MCF 10A (cell line): ENCODE measurements at regions of chr6 and their contacts with region 1.

Region 1: DNA sequence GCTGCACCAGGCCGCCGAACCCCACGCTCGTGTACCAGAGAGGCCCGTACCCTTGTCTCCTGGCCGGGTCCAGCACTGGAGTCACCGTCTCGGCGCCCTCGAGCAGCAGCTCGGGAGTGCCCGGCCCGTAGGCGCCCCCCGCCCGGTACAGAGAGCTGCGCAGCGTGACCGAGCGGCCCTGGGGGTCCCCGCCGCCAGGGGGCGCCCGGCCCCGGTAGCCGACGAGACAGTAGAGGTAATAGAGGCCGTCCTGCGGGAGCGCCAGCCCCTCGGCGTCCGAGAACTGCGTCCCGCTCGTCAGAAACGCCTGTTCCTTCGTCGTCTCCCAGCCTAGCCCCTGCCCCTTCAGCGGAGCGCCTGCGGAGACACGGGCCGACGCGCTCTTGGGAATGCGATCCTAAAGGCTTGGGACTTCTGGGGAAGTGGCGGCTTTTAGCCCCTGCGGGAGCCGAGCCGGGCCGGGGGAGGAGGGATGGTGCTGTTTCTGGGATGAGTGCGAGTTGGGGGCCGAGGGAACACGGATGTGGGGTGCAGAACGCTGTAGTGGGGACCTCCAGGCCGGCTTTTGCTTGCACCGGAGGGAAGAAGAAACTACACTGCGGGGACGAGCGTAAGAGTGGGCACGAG is 1.3 kb downstream of the LTB start:
- DNase-seq: peak; percentile 61
- H3K4me3 Mint-ChIP-seq: peak overlapping the region; percentile 96
- H3K27ac Mint-ChIP-seq: peak overlapping the region; percentile 66
- H3K4me1 Mint-ChIP-seq: peaks cover 10% of the 10 kb centered on the region
- H3K27me3 Mint-ChIP-seq: no peaks in the 10 kb centered on the region
- CTCF ChIP-seq: peak; percentile 87

Region 2: GRCh38 chr6:31529329-31530150 is 51.4 kb before region 1 on chr6:
- CTCF ChIA-PET with region 1: no interaction called
- POLR2A ChIA-PET with region 1: no interaction called
- intact Hi-C with region 1: no loop called
- DNase-seq: no peak
- H3K4me3 Mint-ChIP-seq: no peak overlapping the region
- H3K27ac Mint-ChIP-seq: no peak overlapping the region
- H3K4me1 Mint-ChIP-seq: no peaks in the 10 kb centered on the region
- H3K27me3 Mint-ChIP-seq: no peaks in the 10 kb centered on the region
- CTCF ChIP-seq: no peak

Region 3: DNA sequence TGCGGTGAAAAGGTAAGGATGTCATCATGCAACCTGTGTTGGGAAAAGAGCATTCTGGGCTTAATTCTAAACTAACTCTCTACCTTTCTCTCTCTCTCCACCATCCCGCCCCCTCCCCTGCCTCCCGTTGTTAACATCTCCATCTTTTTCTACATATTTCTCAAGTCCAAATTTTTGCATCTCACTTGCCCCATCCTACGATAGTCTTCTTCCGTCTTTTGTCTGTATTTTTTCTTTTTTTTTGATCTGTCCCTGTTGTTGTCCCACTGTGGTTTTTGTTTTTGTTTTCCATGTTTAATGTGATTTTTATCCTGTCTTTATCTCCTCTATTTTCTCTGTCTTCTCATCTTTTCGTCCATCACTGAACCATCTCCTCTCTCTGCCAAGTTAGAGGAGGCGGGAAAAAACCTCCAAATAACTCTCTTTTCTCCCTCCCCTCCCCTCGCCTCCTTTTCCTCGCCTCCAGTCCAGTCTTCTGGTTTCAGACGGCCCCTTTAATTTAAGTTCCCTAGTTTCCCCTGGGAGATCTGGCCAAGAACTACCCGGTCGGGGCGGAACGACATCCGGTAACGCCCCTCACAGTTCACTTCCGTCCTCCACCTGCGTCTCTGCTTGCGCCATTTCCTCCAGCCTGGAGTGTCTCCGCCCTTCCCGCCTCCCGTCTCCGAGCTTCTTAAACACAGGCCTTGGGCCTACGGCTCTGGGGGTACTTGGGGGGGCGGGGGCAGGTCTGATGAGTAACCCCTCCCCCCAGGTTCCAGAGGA is 33.8 kb before region 1 on chr6 and contains the start of gene NFKBIL1:
- CTCF ChIA-PET with region 1: interaction called, 7 read pairs
- POLR2A ChIA-PET with region 1: interaction called, 10 read pairs
- intact Hi-C with region 1: loop called (anchors 5 kb)
- DNase-seq: peak; percentile 96
- H3K4me3 Mint-ChIP-seq: peak within 1 kb of the TSS; percentile 75
- H3K27ac Mint-ChIP-seq: peak within 1 kb of the TSS; percentile 57
- H3K4me1 Mint-ChIP-seq: peaks cover 18% of the 10 kb centered on the region
- H3K27me3 Mint-ChIP-seq: no peaks in the 10 kb centered on the region
- CTCF ChIP-seq: no peak
- total RNA-seq, gene NFKBIL1: 25.2 and 30.3 TPM in 2 replicates

Region 4: GRCh38 chr6:31569861-31570536 is 10.9 kb before region 1 on chr6:
- CTCF ChIA-PET with region 1: interaction called, 10 read pairs
- POLR2A ChIA-PET with region 1: interaction called, 5 read pairs
- intact Hi-C with region 1: no loop called
- DNase-seq: no peak
- H3K4me3 Mint-ChIP-seq: no peak overlapping the region
- H3K27ac Mint-ChIP-seq: no peak overlapping the region
- H3K4me1 Mint-ChIP-seq: peaks cover 6% of the 10 kb centered on the region
- H3K27me3 Mint-ChIP-seq: peaks cover 38% of the 10 kb centered on the region
- CTCF ChIP-seq: no peak